Activated CD8-positive, alpha-beta T cell treated with anti-CD3 and anti-CD28 coated beads for 36 hours (primary cell): ENCODE measurements at regions of chr18 and their contacts with region 1.

Region 1: GRCh38 chr18:42028247-42028832 is 73.3 kb downstream of the PIK3C3 start:
- DNase-seq: peak; percentile 41
- ATAC-seq: no peak
- H3K4me3 Mint-ChIP-seq: no peak overlapping the region
- H3K27ac Mint-ChIP-seq: no peak overlapping the region
- H3K4me1 Mint-ChIP-seq: peaks cover 38% of the 10 kb centered on the region
- H3K27me3 Mint-ChIP-seq: no peaks in the 10 kb centered on the region
- CTCF ChIP-seq: peak; percentile 81

Region 2: DNA sequence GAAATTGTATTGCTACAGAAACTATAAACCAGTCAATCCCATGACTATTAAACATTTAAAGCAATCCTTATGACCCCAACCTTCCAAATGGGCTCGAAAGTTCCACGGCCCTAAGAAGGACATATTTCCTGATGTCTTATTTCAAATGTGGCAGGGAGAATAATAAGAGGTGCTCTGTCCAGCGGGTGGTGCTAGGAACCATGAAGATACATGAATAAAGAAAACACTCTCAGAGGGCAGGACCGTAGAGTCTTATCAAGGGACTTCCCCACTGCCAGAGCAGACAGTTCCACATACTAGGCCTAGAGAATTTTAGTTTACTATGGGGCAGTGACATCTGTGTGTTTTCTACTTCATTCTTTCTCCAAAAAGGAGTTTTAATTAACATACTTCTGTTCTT is 260.4 kb before region 1 on chr18:
- CTCF ChIA-PET with region 1: no interaction called
- POLR2A ChIA-PET with region 1: no interaction called
- intact Hi-C with region 1: no loop called
- DNase-seq: peak; percentile 4
- ATAC-seq: no peak
- H3K4me3 Mint-ChIP-seq: no peak overlapping the region
- H3K27ac Mint-ChIP-seq: no peak overlapping the region
- H3K4me1 Mint-ChIP-seq: no peaks in the 10 kb centered on the region
- H3K27me3 Mint-ChIP-seq: no peaks in the 10 kb centered on the region
- CTCF ChIP-seq: no peak

Region 3: DNA sequence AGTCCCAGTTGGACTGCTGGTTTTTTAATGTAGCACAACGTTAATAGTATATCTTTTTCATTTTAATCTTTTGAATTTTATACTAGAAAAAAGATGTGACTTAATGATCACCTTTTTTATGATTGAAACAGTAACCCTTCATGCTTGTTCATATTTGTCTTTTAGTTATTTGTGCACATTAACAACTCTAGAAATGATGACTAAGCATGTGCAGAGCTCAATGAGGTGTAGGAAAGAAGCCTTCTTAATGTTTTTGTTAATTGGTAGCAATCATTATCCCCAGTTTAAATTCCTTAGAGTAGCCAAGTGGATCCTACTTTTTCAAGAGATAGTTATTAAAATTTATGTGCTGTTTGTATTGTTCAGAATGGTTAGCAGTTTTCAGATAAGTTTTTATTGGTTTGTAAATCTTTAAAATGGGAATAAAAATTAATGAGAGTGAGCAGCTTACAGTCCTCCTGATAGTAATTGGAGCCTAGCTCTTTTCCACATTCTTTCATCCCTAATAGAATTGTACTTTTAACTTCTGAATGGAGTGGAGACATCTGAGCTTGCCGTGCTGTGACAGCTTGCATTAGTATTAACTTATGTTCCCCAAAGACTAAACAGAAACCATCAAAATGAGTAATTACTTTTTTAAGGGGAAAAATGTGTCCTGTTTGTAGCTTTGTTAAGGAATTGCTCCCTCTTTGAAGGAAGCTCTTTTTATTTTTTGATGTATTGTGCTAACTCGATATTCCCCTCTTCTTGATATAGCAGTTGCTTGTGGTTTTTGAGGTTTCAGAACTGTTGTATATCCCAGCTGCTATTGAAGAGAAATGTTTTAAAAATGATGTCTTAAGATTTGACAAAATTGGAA is 56.0 kb before region 1 on chr18:
- CTCF ChIA-PET with region 1: interaction called, 12 read pairs
- POLR2A ChIA-PET with region 1: no interaction called
- intact Hi-C with region 1: no loop called
- DNase-seq: no peak
- ATAC-seq: no peak
- H3K4me3 Mint-ChIP-seq: no peak overlapping the region
- H3K27ac Mint-ChIP-seq: no peak overlapping the region
- H3K4me1 Mint-ChIP-seq: peaks cover 59% of the 10 kb centered on the region
- H3K27me3 Mint-ChIP-seq: no peaks in the 10 kb centered on the region
- CTCF ChIP-seq: no peak

Region 4: DNA sequence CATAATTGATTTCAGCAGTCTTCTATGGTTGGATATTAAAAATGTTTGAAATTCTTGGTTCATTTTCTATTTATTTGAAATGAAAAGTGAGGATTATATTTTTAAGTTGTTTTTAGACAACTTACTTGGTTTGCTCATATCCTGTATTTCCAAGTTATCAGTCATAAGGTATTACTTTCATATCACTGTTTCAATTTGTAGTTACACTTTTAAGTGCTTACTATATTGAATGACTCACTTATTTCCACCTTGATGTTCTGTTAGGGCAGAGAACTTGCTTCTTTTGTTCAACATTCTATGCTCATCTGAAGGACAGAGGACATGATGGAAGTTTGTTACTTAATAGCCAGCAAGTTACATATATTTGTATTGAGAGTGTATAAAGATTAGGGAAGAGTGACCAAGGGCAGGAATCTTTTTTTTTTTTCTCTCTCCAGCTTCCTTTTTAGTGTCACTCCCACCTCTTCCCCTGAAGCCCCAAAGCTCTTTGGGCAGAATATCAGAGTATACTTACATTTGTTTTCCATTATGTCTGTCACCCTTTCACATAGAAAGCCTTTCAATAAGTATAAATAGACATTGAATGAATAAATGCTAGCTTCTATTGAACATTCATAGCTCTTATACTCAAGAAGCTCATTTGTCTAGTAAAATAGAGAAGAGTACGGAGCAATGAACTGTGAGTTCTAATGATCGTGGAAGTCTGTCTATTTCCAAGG is 45.2 kb before region 1 on chr18:
- CTCF ChIA-PET with region 1: interaction called, 9 read pairs
- POLR2A ChIA-PET with region 1: no interaction called
- intact Hi-C with region 1: loop called (anchors 5 kb)
- DNase-seq: no peak
- ATAC-seq: peak; percentile 95
- H3K4me3 Mint-ChIP-seq: peak overlapping the region; percentile 19
- H3K27ac Mint-ChIP-seq: peak overlapping the region; percentile 85
- H3K4me1 Mint-ChIP-seq: peaks cover 52% of the 10 kb centered on the region
- H3K27me3 Mint-ChIP-seq: no peaks in the 10 kb centered on the region
- CTCF ChIP-seq: no peak

Region 5: DNA sequence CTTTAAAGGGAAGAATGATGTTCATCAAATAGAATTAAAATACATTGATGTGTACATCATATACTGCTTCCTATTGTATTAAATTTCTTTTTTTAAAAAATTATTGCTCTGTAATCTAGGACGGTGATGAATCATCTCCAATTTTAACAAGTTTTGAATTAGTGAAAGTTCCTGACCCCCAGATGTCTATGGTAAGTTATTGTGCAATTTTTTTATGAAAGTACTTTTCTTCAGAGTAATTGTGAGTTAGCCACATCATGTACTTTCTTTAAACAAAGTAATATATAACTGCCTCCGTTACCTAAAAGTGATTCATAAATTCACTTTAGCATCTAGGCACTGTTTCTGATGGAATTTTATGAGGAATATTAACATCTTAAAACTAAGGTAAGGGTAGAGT is 35.2 kb before region 1 on chr18:
- CTCF ChIA-PET with region 1: interaction called, 10 read pairs
- POLR2A ChIA-PET with region 1: no interaction called
- intact Hi-C with region 1: no loop called
- DNase-seq: no peak
- ATAC-seq: no peak
- H3K4me3 Mint-ChIP-seq: no peak overlapping the region
- H3K27ac Mint-ChIP-seq: no peak overlapping the region
- H3K4me1 Mint-ChIP-seq: peaks cover 11% of the 10 kb centered on the region
- H3K27me3 Mint-ChIP-seq: no peaks in the 10 kb centered on the region
- CTCF ChIP-seq: no peak

Region 6: GRCh38 chr18:42011053-42011452 is 17.3 kb before region 1 on chr18:
- CTCF ChIA-PET with region 1: interaction called, 59 read pairs
- POLR2A ChIA-PET with region 1: no interaction called
- intact Hi-C with region 1: no loop called
- DNase-seq: no peak
- ATAC-seq: peak; percentile 62
- H3K4me3 Mint-ChIP-seq: no peak overlapping the region
- H3K27ac Mint-ChIP-seq: no peak overlapping the region
- H3K4me1 Mint-ChIP-seq: peaks cover 15% of the 10 kb centered on the region
- H3K27me3 Mint-ChIP-seq: no peaks in the 10 kb centered on the region
- CTCF ChIP-seq: no peak

Region 7: GRCh38 chr18:42038936-42039335 is 10.6 kb after region 1 on chr18:
- CTCF ChIA-PET with region 1: interaction called, 12 read pairs
- POLR2A ChIA-PET with region 1: interaction called, 3 read pairs
- intact Hi-C with region 1: no loop called
- DNase-seq: no peak
- ATAC-seq: no peak
- H3K4me3 Mint-ChIP-seq: no peak overlapping the region
- H3K27ac Mint-ChIP-seq: no peak overlapping the region
- H3K4me1 Mint-ChIP-seq: no peaks in the 10 kb centered on the region
- H3K27me3 Mint-ChIP-seq: no peaks in the 10 kb centered on the region
- CTCF ChIP-seq: no peak

Region 8: DNA sequence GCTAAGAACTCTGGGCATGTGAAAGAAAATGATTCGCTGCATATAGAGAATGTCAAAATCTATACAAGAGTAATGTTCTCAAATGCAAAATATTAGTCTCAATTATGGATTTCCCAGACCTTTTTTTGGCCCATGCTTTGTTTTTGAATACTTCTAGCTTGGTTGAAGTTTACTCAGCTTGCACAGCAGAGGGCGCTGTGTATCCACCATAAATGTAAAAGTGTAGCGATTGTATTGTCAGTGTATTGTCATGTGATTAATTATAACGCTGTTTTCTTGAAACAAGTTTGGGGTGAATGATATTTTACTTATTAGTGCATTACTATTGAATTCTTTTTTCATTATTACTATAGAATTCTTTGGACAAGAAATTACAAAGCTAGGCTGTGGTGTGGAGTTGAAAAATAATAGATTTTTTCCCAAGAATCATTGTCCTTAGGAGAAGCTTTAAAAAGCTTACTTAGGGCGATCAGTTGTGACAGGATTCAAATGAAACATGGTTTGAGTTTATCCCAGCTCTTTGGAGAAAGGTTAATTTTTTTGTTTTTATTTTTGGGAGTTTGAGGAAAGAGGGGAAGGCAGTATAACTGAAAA is 24.9 kb after region 1 on chr18:
- CTCF ChIA-PET with region 1: interaction called, 33 read pairs
- POLR2A ChIA-PET with region 1: no interaction called
- intact Hi-C with region 1: no loop called
- DNase-seq: peak; percentile 58
- ATAC-seq: peak; percentile 84
- H3K4me3 Mint-ChIP-seq: no peak overlapping the region
- H3K27ac Mint-ChIP-seq: no peak overlapping the region
- H3K4me1 Mint-ChIP-seq: peaks cover 8% of the 10 kb centered on the region
- H3K27me3 Mint-ChIP-seq: no peaks in the 10 kb centered on the region
- CTCF ChIP-seq: peak; percentile 96

Region 9: GRCh38 chr18:42157878-42158277 is 129.5 kb after region 1 on chr18:
- CTCF ChIA-PET with region 1: no interaction called
- POLR2A ChIA-PET with region 1: no interaction called
- intact Hi-C with region 1: no loop called
- DNase-seq: no peak
- ATAC-seq: no peak
- H3K4me3 Mint-ChIP-seq: no peak overlapping the region
- H3K27ac Mint-ChIP-seq: no peak overlapping the region
- H3K4me1 Mint-ChIP-seq: no peaks in the 10 kb centered on the region
- H3K27me3 Mint-ChIP-seq: no peaks in the 10 kb centered on the region
- CTCF ChIP-seq: no peak